CD8-positive, alpha-beta T cell (primary cell): ENCODE measurements at regions of chr7 and their contacts with region 1.

Region 1: DNA sequence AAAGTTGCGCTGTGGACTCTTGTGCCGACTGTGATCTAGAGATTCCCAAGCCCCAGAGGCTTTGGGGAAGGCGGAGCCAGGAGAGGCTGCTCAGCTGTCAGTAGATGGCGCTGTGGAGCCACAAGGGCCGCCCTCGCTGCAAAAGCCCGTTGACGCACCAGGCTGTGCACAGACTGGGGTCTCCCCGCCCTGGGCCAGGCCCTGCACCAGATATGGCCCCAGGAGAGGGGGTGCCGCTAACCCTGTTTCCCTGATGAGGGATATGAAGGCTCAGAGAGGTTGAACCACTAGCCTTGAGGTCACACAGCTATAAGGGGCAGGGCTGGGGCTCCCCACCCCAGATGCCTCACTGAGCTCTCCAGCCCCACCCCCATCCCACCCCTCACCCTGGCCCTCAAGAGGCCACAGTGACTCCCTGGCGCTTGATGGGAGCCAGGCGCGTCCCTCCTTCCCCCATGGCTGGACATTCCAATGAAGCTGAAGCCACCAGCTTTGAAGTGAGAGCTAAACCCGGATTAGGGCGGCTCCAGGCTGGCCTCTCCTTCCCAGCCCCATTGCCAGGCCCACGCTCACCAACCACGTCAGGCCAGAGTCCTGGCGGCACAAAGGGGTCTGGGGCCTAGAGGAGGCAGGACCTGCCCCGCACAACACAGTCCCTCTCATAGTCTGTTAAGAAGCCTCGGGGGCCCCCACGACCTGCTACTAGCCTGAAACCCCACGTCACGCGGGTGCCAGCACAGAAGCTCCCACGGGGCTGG is 26.4 kb downstream of the MYL10 start:
- DNase-seq: peak; percentile 48 to 80 (median 69)
- ATAC-seq: peak; percentile 69
- H3K4me3 ChIP-seq: no peak overlapping the region
- H3K4me3 Mint-ChIP-seq: no peak overlapping the region
- H3K27ac ChIP-seq: no peak overlapping the region
- H3K27ac Mint-ChIP-seq: no peak overlapping the region
- H3K4me1 ChIP-seq: no peaks in the 10 kb centered on the region
- H3K4me1 Mint-ChIP-seq: no peaks in the 10 kb centered on the region
- H3K27me3 ChIP-seq: no peaks in the 10 kb centered on the region
- H3K27me3 Mint-ChIP-seq: no peaks in the 10 kb centered on the region
- CTCF ChIP-seq: peak; percentile 84

Region 2: GRCh38 chr7:102236592-102237287 is 634.1 kb after region 1 on chr7:
- CTCF ChIA-PET with region 1: interaction called, 16 read pairs
- POLR2A ChIA-PET with region 1: no interaction called
- intact Hi-C with region 1: loop called (anchors 1 kb)
- DNase-seq: peak in 7 of 9 experiments; percentile 9 to 55 (median 38)
- ATAC-seq: no peak
- H3K4me3 ChIP-seq: no peak overlapping the region
- H3K4me3 Mint-ChIP-seq: no peak overlapping the region
- H3K27ac ChIP-seq: no peak overlapping the region
- H3K27ac Mint-ChIP-seq: no peak overlapping the region
- H3K4me1 ChIP-seq: no peaks in the 10 kb centered on the region
- H3K4me1 Mint-ChIP-seq: no peaks in the 10 kb centered on the region
- H3K27me3 ChIP-seq: no peaks in the 10 kb centered on the region
- H3K27me3 Mint-ChIP-seq: no peaks in the 10 kb centered on the region
- CTCF ChIP-seq: peak; percentile 52

Region 3: DNA sequence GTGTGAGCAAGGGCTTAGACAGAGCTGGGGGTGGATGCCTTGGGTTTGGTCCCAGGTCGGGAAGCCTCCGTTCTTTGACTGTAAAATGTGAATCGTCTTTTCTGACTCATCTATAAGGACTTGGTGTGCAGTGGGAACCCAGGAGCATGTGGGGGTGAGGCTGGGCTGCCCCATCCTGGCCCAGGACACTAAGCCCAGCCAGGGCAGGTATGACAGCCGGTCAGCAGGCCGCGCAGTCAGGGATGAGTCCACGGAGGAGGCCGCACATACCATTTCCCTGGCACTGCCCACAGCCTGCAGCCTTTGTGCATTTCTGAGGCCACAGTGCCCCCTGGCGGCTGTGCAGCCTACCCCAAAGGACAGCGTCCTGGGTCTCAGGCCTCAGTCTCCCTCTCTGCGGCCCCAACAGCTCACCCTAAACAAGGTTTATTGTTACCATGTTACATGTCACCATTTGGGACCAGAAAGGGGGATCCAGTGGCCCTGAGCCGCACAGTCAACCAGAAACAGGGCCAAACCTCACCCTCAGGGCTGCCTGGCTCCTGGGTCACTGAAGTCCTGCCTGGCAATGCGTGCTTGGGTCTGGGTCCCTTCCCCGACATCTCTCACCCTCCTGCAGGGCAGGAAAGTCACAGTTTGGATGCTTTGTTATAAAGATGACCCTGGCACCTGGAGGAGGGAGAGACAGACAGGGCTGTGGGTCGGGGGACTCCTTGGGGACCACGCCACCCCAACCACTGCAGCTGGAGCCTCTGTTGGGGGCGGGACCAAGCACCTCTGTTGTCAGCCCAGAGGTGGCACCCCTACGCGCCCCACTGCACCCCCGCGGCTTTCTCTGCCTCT is 669.6 kb after region 1 on chr7:
- CTCF ChIA-PET with region 1: interaction called, 30 read pairs
- POLR2A ChIA-PET with region 1: no interaction called
- intact Hi-C with region 1: loop called in 1 of 2 experiments (anchors 1 kb)
- DNase-seq: peak; percentile 51 to 87 (median 76)
- ATAC-seq: peak; percentile 77
- H3K4me3 ChIP-seq: no peak overlapping the region
- H3K4me3 Mint-ChIP-seq: no peak overlapping the region
- H3K27ac ChIP-seq: no peak overlapping the region
- H3K27ac Mint-ChIP-seq: no peak overlapping the region
- H3K4me1 ChIP-seq: peaks cover 2% of the 10 kb centered on the region
- H3K4me1 Mint-ChIP-seq: peaks cover 2% of the 10 kb centered on the region
- H3K27me3 ChIP-seq: no peaks in the 10 kb centered on the region
- H3K27me3 Mint-ChIP-seq: no peaks in the 10 kb centered on the region
- CTCF ChIP-seq: peak; percentile 83

Region 4: DNA sequence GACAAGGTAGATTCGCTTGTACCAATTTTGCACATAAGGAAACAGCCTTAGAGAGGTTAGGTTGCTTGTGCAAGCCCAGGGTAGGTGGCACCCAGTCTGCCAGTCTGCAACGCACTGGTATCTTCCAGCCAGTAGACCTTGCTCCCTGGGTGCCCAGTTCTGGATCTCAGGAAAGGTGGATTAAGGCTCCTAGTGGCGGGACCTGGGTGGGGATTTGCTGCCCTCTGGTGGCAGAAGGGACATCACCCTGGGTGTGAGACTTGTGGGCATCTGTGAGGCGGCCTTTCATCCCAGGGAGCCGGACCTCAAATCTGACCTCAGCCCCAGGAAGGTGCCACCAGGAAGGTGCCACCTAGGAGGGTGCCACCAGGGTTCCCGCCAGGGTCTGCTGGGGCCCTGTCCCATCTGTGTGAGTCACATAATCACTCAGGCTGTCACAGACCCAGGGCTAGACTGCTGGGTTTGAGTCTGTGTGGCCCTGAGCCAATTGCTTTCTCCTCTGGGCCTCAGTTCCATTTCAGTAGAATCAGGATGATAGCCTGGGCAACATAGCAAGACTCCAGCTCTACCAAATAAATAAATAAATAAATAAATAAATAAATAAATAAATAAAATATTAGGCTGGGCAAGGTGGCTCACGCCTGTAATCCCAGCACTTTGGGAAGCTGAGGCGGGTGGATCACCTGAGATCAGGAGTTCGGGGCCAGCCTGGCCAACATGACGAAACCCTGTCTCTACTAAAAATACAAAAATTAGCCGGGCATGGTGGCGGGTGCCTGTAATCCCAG is 788.2 kb after region 1 on chr7:
- CTCF ChIA-PET with region 1: interaction called, 3 read pairs
- POLR2A ChIA-PET with region 1: no interaction called
- intact Hi-C with region 1: loop called (anchors 5 kb)
- DNase-seq: peak; percentile 34 to 81 (median 70)
- ATAC-seq: peak; percentile 71
- H3K4me3 ChIP-seq: no peak overlapping the region
- H3K4me3 Mint-ChIP-seq: no peak overlapping the region
- H3K27ac ChIP-seq: no peak overlapping the region
- H3K27ac Mint-ChIP-seq: no peak overlapping the region
- H3K4me1 ChIP-seq: peaks cover 4% of the 10 kb centered on the region
- H3K4me1 Mint-ChIP-seq: peaks cover 5% of the 10 kb centered on the region
- H3K27me3 ChIP-seq: no peaks in the 10 kb centered on the region
- H3K27me3 Mint-ChIP-seq: no peaks in the 10 kb centered on the region
- CTCF ChIP-seq: peak; percentile 82